Transverse colon (tissue), 4 donors: ENCODE measurements at regions of chr7 and their contacts with region 1.

Region 1: GRCh38 chr7:99409806-99410205 is 1.0 kb downstream of the BUD31 start:
- DNase-seq: no peak
- H3K4me3 ChIP-seq: peak overlapping the region in 3 of 4 donors; percentile 87 to 99 (median 90)
- H3K27ac ChIP-seq: peak overlapping the region; percentile 91 to 99 (median 93)
- H3K4me1 ChIP-seq: peaks cover 16 to 40% (median 27%) of the 10 kb centered on the region in 4 donors
- H3K27me3 ChIP-seq: no peaks in the 10 kb centered on the region
- CTCF ChIP-seq: no peak
- EP300 ChIP-seq: no peak
- POLR2A ChIP-seq: no peak

Region 2: GRCh38 chr7:99364961-99365817 is 44.6 kb before region 1 on chr7:
- in situ Hi-C with region 1: loop called in 1 of 4 experiments (anchors 10 kb)
- intact Hi-C with region 1: no loop called
- DNase-seq: peak; percentile 80
- H3K4me3 ChIP-seq: no peak overlapping the region
- H3K27ac ChIP-seq: peak overlapping the region in 1 of 4 donors; percentile 42
- H3K4me1 ChIP-seq: peaks cover 0 to 3% (median 0%) of the 10 kb centered on the region in 4 donors
- H3K27me3 ChIP-seq: no peaks in the 10 kb centered on the region
- CTCF ChIP-seq: peak; percentile 43 to 69 (median 57)
- EP300 ChIP-seq: no peak
- POLR2A ChIP-seq: no peak

Region 3: DNA sequence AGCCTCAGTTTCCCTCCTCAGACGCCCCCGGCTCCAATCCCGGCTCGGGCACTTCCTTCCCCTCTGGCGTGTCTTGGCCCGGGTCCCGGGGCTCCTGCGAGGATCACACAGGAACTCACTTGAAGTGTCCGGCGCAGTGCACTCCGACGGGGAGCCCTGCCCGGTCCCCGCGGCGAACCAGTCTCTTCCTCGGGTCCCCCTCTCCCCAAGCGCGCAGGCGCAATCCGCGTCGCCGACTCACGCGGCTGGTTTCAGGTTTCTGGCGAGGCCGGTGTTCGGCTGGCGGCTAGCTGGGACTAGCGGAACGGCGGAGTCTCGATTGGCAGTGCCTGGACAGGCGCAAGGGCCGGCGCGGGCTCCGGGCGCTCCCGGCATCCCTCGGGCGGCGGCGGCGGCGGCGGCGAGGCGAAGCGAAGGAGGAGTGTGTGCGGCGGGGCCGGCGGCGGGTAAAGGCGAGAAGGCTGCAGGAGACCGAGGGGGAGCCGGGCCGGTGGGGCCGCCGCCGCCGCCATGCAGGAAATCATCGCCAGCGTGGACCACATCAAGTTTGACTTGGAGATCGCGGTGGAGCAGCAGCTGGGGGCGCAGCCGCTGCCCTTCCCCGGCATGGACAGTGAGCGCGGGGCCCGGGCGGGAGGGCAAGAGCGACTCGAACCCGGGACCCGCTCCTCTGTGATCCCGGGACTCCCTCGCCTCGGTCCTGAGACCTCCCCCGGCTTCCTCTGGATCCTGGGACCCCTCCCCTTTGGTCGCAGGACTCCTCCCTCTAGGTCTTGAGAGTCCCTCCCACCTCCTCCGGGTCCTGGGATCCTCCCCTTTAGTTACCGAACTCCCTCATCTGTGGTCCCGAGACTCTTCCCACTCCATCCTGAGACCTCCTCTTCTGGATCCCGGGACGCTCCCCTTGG is 29.0 kb after region 1 on chr7 and contains the starts of genes CPSF4 and PTCD1:
- in situ Hi-C with region 1: no loop called
- intact Hi-C with region 1: no loop called
- DNase-seq: peak; percentile 96
- H3K4me3 ChIP-seq: peak within 1 kb of the TSS; percentile 84 to 99 (median 91)
- H3K27ac ChIP-seq: peak within 1 kb of the TSS; percentile 87 to 93 (median 91)
- H3K4me1 ChIP-seq: peaks cover 9 to 22% (median 19%) of the 10 kb centered on the region in 4 donors
- H3K27me3 ChIP-seq: no peaks in the 10 kb centered on the region
- CTCF ChIP-seq: no peak
- EP300 ChIP-seq: no peak
- POLR2A ChIP-seq: peak; percentile 49
- total RNA-seq, gene CPSF4: 20.7 to 65.5 (median 24.8) TPM
- total RNA-seq, gene PTCD1: 1.8 to 38.2 (median 5.5) TPM

Region 4: DNA sequence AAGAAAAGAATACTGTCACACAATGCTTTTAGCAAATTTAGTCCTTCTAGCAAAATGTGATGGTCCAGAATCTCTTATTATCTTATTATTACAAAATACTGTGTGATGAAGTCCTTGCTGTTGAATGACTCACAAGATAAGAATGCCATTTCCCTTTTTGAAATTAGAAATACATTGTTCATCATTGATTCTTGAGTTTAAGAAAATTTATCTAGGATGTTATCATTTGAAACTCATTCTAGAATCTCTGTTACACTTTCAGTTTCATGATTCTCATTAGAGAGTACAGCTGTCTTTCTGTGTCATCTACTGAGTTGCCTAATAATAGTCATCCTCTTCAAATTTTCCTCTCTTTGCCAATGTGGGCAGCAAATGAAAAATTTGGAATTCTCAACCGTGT is 104.2 kb after region 1 on chr7:
- in situ Hi-C with region 1: no loop called
- intact Hi-C with region 1: no loop called
- DNase-seq: no peak
- H3K4me3 ChIP-seq: no peak overlapping the region
- H3K27ac ChIP-seq: no peak overlapping the region
- H3K4me1 ChIP-seq: no peaks in the 10 kb centered on the region
- H3K27me3 ChIP-seq: no peaks in the 10 kb centered on the region
- CTCF ChIP-seq: no peak
- EP300 ChIP-seq: no peak
- POLR2A ChIP-seq: no peak